ENCODE measurements at regions of chr12 and their contacts with region 1.

Region 1: DNA sequence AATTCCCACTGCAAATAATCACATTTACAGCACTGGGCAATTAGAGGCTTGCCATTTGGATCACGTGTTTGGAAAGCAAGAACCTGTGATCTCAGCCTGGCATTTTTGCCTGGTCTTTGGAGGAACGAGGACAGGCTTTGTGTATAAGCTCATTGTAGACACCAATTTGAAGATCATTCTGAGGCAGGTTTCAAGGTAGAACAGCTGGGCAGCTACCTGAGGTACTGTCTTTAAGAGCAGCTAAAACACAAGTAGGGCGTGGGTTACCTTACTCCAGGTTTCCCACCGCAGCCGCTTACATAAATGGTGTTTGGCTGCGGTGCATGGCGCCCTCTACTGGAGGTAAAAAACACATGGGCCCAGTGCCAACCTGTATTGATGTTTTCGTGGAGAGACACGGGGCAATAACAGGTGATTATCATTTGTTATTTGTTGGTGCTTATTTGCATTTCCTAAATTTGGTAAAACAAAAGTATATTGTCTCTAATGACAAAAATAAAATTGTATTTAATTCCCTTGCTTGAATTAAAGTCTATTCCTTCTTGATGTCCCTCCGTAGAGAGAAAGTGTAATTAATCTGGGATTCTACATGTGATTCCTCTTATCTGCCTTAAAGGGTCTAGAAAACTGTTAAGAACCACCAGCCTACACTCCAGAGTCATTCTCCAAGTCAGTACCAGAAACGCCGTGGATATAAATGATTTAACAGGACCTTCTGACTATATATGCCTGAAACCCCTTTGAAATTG is 69.7 kb downstream of the SVOP start:
- DNase-seq: peak; percentile 85
- ATAC-seq: peak; percentile 73
- H3K4me3 ChIP-seq: no peak overlapping the region
- H3K4me3 Mint-ChIP-seq: no peak overlapping the region
- H3K27ac ChIP-seq: no peak overlapping the region
- H3K27ac Mint-ChIP-seq: no peak overlapping the region
- H3K4me1 ChIP-seq: peaks cover 0 to 4% of the 10 kb centered on the region in 2 donors
- H3K4me1 Mint-ChIP-seq: peaks cover 6% of the 10 kb centered on the region
- H3K27me3 ChIP-seq: peaks cover 0 to 5% (median 0%) of the 10 kb centered on the region in 4 experiments
- H3K27me3 Mint-ChIP-seq: peaks cover 9% of the 10 kb centered on the region
- CTCF ChIP-seq: peak; percentile 99

Region 2: DNA sequence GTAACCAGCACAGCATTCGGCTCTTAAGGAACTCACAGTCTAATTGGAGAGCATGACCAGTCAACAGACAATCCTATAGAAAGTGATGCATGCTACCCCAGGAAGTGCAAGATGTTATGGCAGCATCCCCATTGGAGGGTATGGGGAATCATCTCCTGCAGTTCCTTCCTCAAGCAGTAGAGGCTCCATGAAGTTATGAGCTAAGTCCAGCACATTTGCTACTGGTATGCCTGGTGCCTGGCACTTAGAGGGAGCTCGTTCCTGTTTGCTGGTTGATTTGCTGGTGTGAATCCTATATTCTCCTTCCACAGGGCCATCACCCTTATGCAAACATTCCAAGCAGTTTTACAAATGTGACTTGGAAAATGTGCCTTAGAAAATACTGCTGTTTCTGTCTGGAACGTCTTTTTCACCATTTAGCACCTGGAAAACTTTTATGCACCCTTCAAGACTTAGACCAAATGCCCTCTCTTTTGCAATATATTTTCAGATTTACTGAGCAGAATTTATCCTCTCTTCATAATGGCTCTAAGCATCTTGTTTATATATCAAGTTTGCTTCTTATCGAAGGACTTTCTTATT is 958.2 kb before region 1 on chr12:
- CTCF ChIA-PET with region 1: interaction called, 3 read pairs
- POLR2A ChIA-PET with region 1: no interaction called
- intact Hi-C with region 1: loop called (anchors 5 kb)
- DNase-seq: peak; percentile 8
- ATAC-seq: no peak
- H3K4me3 ChIP-seq: no peak overlapping the region
- H3K4me3 Mint-ChIP-seq: no peak overlapping the region
- H3K27ac ChIP-seq: no peak overlapping the region
- H3K27ac Mint-ChIP-seq: no peak overlapping the region
- H3K4me1 ChIP-seq: no peaks in the 10 kb centered on the region
- H3K4me1 Mint-ChIP-seq: no peaks in the 10 kb centered on the region
- H3K27me3 ChIP-seq: peaks cover 0 to 3% (median 0%) of the 10 kb centered on the region in 4 experiments
- H3K27me3 Mint-ChIP-seq: peaks cover 37% of the 10 kb centered on the region
- CTCF ChIP-seq: peak; percentile 26

Region 3: GRCh38 chr12:108826101-108826806 is 124.9 kb before region 1 on chr12:
- CTCF ChIA-PET with region 1: interaction called, 10 read pairs
- POLR2A ChIA-PET with region 1: no interaction called
- intact Hi-C with region 1: loop called (anchors 5 kb)
- DNase-seq: no peak
- ATAC-seq: peak; percentile 10
- H3K4me3 ChIP-seq: no peak overlapping the region
- H3K4me3 Mint-ChIP-seq: peak overlapping the region; percentile 80
- H3K27ac ChIP-seq: no peak overlapping the region
- H3K27ac Mint-ChIP-seq: peak overlapping the region; percentile 70
- H3K4me1 ChIP-seq: peaks cover 14 to 33% of the 10 kb centered on the region in 2 donors
- H3K4me1 Mint-ChIP-seq: peaks cover 52% of the 10 kb centered on the region
- H3K27me3 ChIP-seq: no peaks in the 10 kb centered on the region
- H3K27me3 Mint-ChIP-seq: no peaks in the 10 kb centered on the region
- CTCF ChIP-seq: no peak

Region 4: DNA sequence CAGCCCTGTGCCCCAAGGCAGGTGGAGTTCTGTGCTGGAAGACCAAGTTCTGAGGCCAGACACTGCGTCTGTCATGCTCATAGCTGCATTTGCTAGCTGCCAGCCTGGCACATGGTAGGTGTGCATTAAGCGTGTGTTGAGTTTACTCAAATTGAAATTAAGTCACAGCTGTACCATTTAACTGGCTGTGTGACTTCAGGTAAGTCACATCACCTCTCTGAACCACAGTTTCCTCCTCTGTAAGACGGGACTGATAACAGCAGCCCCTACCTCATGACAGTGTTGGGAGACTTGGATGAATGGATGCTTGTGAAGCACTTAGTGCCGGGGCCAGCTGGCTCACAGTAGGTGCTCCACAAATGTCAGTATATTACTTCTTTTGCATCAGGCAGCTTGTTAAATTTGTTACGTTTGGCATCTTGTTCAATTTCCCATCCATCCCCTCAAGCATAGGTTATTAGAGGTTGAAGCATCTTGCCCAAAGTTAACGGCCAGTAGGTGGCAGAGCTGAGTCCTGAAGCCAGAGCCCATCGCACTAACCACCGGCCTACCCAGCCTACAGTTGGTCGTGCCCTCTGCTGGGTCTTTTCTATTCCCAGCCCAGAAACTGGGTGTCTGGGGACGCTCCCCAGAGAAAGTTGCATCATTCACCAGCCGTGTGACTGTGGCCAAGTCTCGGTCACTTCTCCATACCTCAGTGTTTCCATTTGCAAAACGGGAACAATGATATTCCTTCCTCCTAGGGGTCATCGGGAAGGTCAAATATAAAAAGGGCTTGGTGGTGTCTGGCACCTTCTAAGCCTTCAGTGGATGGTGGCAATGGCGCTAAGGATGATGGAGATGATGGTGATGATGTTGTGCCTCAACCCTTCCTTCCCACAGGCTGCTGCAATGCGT is 66.8 kb before region 1 on chr12:
- CTCF ChIA-PET with region 1: interaction called, 89 read pairs
- POLR2A ChIA-PET with region 1: no interaction called
- intact Hi-C with region 1: loop called (anchors 1 kb)
- DNase-seq: peak; percentile 76
- ATAC-seq: peak; percentile 67
- H3K4me3 ChIP-seq: no peak overlapping the region
- H3K4me3 Mint-ChIP-seq: no peak overlapping the region
- H3K27ac ChIP-seq: no peak overlapping the region
- H3K27ac Mint-ChIP-seq: no peak overlapping the region
- H3K4me1 ChIP-seq: peaks cover 0 to 5% of the 10 kb centered on the region in 2 donors
- H3K4me1 Mint-ChIP-seq: no peaks in the 10 kb centered on the region
- H3K27me3 ChIP-seq: peaks cover 0 to 12% (median 0%) of the 10 kb centered on the region in 4 experiments
- H3K27me3 Mint-ChIP-seq: no peaks in the 10 kb centered on the region
- CTCF ChIP-seq: peak; percentile 79

Region 5: GRCh38 chr12:108890212-108890611 is 61.0 kb before region 1 on chr12:
- CTCF ChIA-PET with region 1: interaction called, 89 read pairs
- POLR2A ChIA-PET with region 1: no interaction called
- intact Hi-C with region 1: no loop called
- DNase-seq: no peak
- ATAC-seq: no peak
- H3K4me3 ChIP-seq: no peak overlapping the region
- H3K4me3 Mint-ChIP-seq: no peak overlapping the region
- H3K27ac ChIP-seq: no peak overlapping the region
- H3K27ac Mint-ChIP-seq: no peak overlapping the region
- H3K4me1 ChIP-seq: no peaks in the 10 kb centered on the region
- H3K4me1 Mint-ChIP-seq: no peaks in the 10 kb centered on the region
- H3K27me3 ChIP-seq: no peaks in the 10 kb centered on the region
- H3K27me3 Mint-ChIP-seq: peaks cover 3% of the 10 kb centered on the region
- CTCF ChIP-seq: no peak

Region 6: DNA sequence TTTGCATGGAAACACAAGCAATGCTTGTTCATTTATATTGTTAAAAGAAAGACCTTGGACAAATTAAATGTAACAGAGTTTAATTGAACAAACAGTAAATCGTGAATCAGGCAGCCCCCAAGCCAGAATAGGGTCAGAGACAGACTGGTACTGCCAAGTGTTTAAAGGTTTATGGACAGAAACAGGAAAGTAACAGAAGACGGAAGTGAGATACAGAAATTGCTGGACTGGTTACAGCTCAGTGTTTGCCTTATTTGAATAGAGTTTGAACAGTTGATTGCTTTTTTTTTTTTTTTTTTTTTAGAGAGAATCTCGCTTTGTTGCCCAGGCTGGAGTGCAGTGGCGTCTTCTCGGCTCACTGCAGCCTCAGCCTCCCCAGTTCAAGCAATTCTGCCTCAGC is 21.0 kb before region 1 on chr12:
- CTCF ChIA-PET with region 1: interaction called, 15 read pairs
- POLR2A ChIA-PET with region 1: no interaction called
- intact Hi-C with region 1: no loop called
- DNase-seq: peak; percentile 47
- ATAC-seq: peak; percentile 69
- H3K4me3 ChIP-seq: no peak overlapping the region
- H3K4me3 Mint-ChIP-seq: no peak overlapping the region
- H3K27ac ChIP-seq: peak overlapping the region in 1 of 2 donors; percentile 39
- H3K27ac Mint-ChIP-seq: no peak overlapping the region
- H3K4me1 ChIP-seq: peaks cover 11 to 17% of the 10 kb centered on the region in 2 donors
- H3K4me1 Mint-ChIP-seq: peaks cover 22% of the 10 kb centered on the region
- H3K27me3 ChIP-seq: no peaks in the 10 kb centered on the region
- H3K27me3 Mint-ChIP-seq: peaks cover 4% of the 10 kb centered on the region
- CTCF ChIP-seq: no peak

Region 7: GRCh38 chr12:109291521-109292341 is 340.6 kb after region 1 on chr12:
- CTCF ChIA-PET with region 1: no interaction called
- POLR2A ChIA-PET with region 1: no interaction called
- intact Hi-C with region 1: no loop called
- DNase-seq: no peak
- ATAC-seq: no peak
- H3K4me3 ChIP-seq: no peak overlapping the region
- H3K4me3 Mint-ChIP-seq: no peak overlapping the region
- H3K27ac ChIP-seq: no peak overlapping the region
- H3K27ac Mint-ChIP-seq: no peak overlapping the region
- H3K4me1 ChIP-seq: no peaks in the 10 kb centered on the region
- H3K4me1 Mint-ChIP-seq: no peaks in the 10 kb centered on the region
- H3K27me3 ChIP-seq: peaks cover 0 to 14% (median 6%) of the 10 kb centered on the region in 4 experiments
- H3K27me3 Mint-ChIP-seq: peaks cover 39% of the 10 kb centered on the region
- CTCF ChIP-seq: no peak